Activated CD4-positive, alpha-beta T cell treated with anti-CD3 and anti-CD28 coated beads for 36 hours (primary cell): ENCODE measurements at regions of chr12 and their contacts with region 1.

Region 1: DNA sequence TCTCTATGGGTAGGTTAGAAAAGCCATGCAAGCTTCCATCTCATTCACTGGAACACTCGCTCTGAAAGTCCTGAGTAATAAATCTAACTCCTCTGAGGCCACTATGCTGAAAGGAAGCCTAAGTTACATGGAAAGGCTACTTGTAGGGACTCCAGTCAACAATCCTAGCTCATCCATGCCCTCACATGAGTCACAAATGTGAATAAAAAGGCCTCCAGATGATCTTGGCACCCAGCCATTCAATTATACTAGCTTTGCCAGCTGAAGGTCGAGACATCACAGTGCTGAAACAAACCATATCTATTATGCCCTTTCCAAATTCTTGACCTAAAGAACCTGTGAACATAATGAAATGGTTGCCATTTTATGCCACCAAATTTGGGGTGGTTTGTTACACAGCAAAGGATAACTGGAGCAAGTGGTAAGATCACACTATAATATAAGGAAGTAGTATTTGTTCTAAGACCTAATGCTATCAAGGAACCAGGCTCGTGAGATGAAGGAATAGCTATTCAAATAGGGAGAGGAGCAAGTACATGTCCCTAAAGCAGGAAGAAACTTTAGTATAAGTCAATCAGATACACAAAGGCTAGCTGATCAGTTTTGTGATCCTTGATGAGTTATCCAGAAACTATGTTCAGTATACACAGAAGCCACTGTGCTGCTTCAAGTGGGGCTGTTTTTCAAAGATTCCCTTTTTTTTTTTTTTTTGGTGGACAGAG is 142.1 kb downstream of the MED13L start:
- DNase-seq: no peak
- ATAC-seq: peak; percentile 34
- H3K4me3 Mint-ChIP-seq: no peak overlapping the region
- H3K27ac Mint-ChIP-seq: peak overlapping the region; percentile 47
- H3K4me1 Mint-ChIP-seq: peaks cover 79% of the 10 kb centered on the region
- H3K27me3 Mint-ChIP-seq: no peaks in the 10 kb centered on the region

Region 2: DNA sequence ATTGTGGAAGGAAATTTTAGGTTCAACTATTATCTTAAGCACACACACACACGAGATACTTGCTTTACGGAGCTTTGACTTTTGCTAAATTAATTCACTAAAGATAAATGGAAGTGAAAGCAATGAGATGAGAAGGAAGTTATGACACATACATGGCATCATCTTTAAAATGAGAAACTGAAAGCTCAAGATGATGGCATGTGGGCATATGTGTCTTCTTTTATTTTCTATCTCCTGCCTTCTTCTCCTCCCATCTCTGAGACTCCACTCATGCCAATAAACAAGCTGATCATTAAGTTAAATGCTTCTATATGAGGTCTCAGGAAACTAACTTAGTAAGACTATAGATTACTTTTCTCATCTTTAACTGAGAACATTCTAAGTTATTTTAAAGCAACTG is 74.6 kb before region 1 on chr12:
- CTCF ChIA-PET with region 1: no interaction called
- POLR2A ChIA-PET with region 1: no interaction called
- intact Hi-C with region 1: loop called in 1 of 2 experiments (anchors 1 kb)
- DNase-seq: no peak
- ATAC-seq: peak; percentile 91
- H3K4me3 Mint-ChIP-seq: peak overlapping the region; percentile 57
- H3K27ac Mint-ChIP-seq: peak overlapping the region; percentile 91
- H3K4me1 Mint-ChIP-seq: peaks cover 51% of the 10 kb centered on the region
- H3K27me3 Mint-ChIP-seq: no peaks in the 10 kb centered on the region

Region 3: GRCh38 chr12:116080415-116080814 is 55.0 kb before region 1 on chr12:
- CTCF ChIA-PET with region 1: interaction called, 3 read pairs
- POLR2A ChIA-PET with region 1: no interaction called
- intact Hi-C with region 1: loop called in 1 of 2 experiments (anchors 5 kb)
- DNase-seq: no peak
- ATAC-seq: peak; percentile 95
- H3K4me3 Mint-ChIP-seq: no peak overlapping the region
- H3K27ac Mint-ChIP-seq: no peak overlapping the region
- H3K4me1 Mint-ChIP-seq: peaks cover 32% of the 10 kb centered on the region
- H3K27me3 Mint-ChIP-seq: no peaks in the 10 kb centered on the region

Region 4: GRCh38 chr12:116123451-116124258 is 11.7 kb before region 1 on chr12:
- CTCF ChIA-PET with region 1: interaction called, 5 read pairs
- POLR2A ChIA-PET with region 1: no interaction called
- intact Hi-C with region 1: loop called (anchors 1 kb)
- DNase-seq: peak; percentile 73
- ATAC-seq: peak; percentile 85
- H3K4me3 Mint-ChIP-seq: peak overlapping the region; percentile 19
- H3K27ac Mint-ChIP-seq: peak overlapping the region; percentile 16
- H3K4me1 Mint-ChIP-seq: peaks cover 68% of the 10 kb centered on the region
- H3K27me3 Mint-ChIP-seq: no peaks in the 10 kb centered on the region

Region 5: DNA sequence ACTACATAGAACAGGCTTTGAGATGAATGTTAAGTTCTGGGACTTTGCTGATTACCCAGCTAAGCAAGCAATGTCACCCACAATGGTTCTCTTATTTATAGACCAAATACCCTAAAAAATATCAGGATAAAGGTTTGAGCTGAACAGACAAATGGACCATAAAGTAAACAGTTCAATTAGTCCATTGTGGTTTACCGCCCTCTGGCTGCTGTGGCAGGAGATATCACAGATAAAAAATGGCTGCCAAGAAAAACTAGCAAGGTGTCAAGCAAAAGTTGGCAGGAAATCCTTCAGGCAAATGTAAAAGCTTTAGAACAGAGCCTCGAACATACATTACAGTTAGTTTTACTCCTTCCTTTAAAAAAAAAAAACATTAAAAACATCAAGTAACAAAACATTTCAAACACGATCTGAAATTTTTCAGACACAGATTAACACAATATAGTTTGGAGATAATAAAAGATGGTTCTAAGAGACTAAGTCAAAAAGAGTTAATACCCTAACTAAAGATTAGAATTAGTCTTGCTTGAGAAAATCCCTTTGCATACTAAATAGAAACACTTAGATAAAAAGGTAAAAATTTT is 100.9 kb after region 1 on chr12:
- CTCF ChIA-PET with region 1: interaction called, 15 read pairs
- POLR2A ChIA-PET with region 1: no interaction called
- intact Hi-C with region 1: no loop called
- DNase-seq: peak; percentile 66
- ATAC-seq: peak; percentile 60
- H3K4me3 Mint-ChIP-seq: peak overlapping the region; percentile 14
- H3K27ac Mint-ChIP-seq: peak overlapping the region; percentile 63
- H3K4me1 Mint-ChIP-seq: peaks cover 35% of the 10 kb centered on the region
- H3K27me3 Mint-ChIP-seq: no peaks in the 10 kb centered on the region

Region 6: DNA sequence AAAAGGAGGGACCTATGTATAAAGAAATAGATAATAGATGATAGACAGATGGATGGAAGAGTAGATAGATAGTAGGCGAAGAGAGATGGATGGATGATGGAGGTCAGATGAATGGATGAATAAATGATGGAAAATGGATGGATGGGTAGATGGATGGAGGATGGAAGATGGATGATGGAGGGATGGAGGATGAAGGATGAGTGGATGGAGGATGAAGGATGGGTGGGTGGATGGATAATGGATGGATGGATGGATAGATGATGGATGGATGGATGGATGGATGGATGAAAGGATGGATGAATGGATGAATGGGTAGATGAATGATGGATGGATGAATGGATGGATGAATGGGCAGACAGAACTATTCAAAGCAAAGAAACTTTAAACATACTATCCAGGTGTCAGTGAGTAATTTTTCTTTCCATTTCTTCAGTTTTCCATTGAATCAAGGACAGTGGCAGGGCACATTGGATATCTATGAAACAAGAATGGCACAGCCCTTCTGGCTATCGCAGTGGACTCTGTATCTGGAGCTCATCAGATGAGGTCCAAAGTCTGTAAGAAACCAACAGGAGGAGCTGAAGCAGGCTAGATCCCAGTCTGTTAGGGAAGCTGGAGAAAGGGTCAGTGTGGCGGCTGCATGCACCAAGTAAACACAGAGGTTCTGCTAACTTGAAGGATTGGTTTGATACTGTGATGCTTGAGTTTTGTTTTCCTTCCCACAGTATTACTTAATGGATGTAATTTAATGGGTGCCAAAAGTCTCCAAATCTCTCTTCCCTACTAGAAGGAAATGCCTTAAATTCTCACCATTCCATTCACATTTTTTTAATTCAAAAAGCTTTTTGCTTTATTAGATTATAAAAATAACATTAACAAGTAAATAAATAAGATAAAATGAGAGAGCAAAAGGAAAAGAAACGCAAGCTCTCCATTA is 160.2 kb after region 1 on chr12:
- CTCF ChIA-PET with region 1: no interaction called
- POLR2A ChIA-PET with region 1: no interaction called
- intact Hi-C with region 1: no loop called
- DNase-seq: no peak
- ATAC-seq: no peak
- H3K4me3 Mint-ChIP-seq: no peak overlapping the region
- H3K27ac Mint-ChIP-seq: no peak overlapping the region
- H3K4me1 Mint-ChIP-seq: no peaks in the 10 kb centered on the region
- H3K27me3 Mint-ChIP-seq: peaks cover 5% of the 10 kb centered on the region

Region 7: DNA sequence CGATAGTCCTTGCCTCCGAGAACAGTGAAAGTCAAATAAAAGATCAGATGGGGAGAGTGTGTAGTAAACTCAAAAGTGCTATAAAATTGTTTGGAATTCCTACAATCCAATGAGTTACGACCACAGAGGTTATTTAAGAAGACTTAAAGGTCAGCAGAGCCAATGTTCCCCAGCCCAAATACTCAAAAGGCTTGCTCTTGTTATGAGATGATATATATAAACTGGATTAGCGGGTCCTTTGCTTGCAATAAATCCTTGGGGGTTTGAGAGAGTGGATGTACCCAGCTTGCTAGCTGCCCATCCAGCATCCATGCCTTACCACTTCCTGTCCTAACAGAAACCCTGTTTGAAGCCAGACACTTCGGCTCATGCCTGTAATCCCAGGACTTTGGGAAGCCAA is 171.1 kb after region 1 on chr12:
- CTCF ChIA-PET with region 1: no interaction called
- POLR2A ChIA-PET with region 1: no interaction called
- intact Hi-C with region 1: no loop called
- DNase-seq: no peak
- ATAC-seq: no peak
- H3K4me3 Mint-ChIP-seq: no peak overlapping the region
- H3K27ac Mint-ChIP-seq: no peak overlapping the region
- H3K4me1 Mint-ChIP-seq: no peaks in the 10 kb centered on the region
- H3K27me3 Mint-ChIP-seq: no peaks in the 10 kb centered on the region

Region 8: GRCh38 chr12:116455540-116456329 is 320.4 kb after region 1 on chr12:
- CTCF ChIA-PET with region 1: no interaction called
- POLR2A ChIA-PET with region 1: no interaction called
- intact Hi-C with region 1: no loop called
- DNase-seq: peak; percentile 8
- ATAC-seq: no peak
- H3K4me3 Mint-ChIP-seq: no peak overlapping the region
- H3K27ac Mint-ChIP-seq: no peak overlapping the region
- H3K4me1 Mint-ChIP-seq: no peaks in the 10 kb centered on the region
- H3K27me3 Mint-ChIP-seq: peaks cover 2% of the 10 kb centered on the region